ENCODE measurements at regions of chr10 and their contacts with region 1.

Region 1: DNA sequence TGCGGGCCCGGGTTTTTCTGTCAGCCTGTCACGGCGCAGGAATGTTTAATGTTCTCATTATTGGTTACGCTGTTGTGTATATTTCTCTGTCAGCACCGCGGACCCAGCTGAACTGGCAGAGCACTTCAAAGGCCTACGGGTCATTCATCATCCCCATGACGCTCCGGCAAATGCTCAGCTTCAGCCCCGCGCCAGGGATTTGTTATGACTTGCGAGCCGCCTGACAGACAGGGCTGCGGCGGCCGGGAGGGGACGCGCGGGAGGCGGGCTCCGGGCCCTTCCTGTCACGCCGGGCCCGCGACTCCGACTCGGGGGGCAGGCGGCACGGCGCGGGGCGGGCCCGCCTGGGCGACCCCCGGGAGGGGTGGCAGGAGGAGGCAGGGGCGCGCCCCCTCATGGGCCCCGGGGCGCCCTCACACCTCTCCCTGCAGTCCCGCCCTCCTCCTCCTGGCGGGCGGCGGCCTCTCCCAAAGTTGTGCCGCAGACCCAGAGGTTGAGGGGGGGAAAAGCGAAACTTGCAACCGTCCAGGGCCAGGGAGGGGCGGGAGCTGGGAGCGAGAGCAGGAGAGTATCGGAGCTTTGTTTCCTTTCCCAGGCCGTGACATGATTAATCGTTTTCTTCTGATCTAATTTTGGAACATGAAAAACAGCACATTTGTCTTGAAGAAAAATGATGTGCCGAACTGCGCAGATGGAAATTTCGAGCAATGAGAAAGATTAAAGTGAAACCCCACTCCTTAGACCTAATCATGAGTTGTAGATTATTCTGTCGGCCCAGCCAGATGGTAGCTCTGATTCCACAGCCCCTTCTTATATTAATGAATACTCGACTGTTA is 59.3 kb upstream of the COMTD1 start:
- DNase-seq: peak; percentile 89 to 96 (median 93)
- ATAC-seq: peak; percentile 82 to 89 (median 85)
- H3K4me3 ChIP-seq: peak overlapping the region; percentile 13 to 60 (median 53)
- H3K27ac ChIP-seq: peak overlapping the region; percentile 95 to 99 (median 98)
- H3K4me1 ChIP-seq: peaks cover 17 to 29% (median 27%) of the 10 kb centered on the region in 3 donors
- H3K27me3 ChIP-seq: no peaks in the 10 kb centered on the region
- CTCF ChIP-seq: peak in 3 of 4 donors; percentile 12 to 19 (median 13)

Region 2: GRCh38 chr10:75210282-75211006 is 84.6 kb before region 1 on chr10 and contains the start of gene VDAC2:
- intact Hi-C with region 1: no loop called
- DNase-seq: peak; percentile 88 to 96 (median 94)
- ATAC-seq: peak; percentile 95 to 98 (median 96)
- H3K4me3 ChIP-seq: peak within 1 kb of the TSS; percentile 66 to 99 (median 84)
- H3K27ac ChIP-seq: peak within 1 kb of the TSS; percentile 97 to 99 (median 98)
- H3K4me1 ChIP-seq: peaks cover 11 to 13% (median 11%) of the 10 kb centered on the region in 3 donors
- H3K27me3 ChIP-seq: no peaks in the 10 kb centered on the region
- CTCF ChIP-seq: no peak
- total RNA-seq, gene VDAC2: 79.4 to 113 (median 96.4) TPM

Region 3: DNA sequence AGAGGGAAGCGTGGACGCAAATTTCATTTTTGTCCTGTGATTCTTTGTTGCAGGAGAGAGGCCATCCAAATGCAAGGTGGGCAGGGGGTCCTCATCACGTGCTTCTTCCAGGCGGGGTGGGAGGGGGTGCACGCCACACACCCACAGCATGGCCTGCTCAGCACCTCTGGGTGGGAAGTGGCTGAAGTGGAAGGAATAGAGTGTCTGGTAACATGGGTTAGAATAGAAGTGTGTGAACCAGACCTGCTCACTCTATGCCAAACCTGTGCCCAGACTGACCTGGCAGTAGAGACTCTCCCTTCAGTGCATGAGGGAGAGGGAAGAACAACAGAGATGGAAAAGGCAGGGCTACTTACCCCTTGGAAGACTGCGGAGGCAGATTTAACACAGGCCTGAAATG is 84.7 kb after region 1 on chr10:
- intact Hi-C with region 1: loop called in 1 of 3 experiments (anchors 10 kb)
- DNase-seq: no peak
- ATAC-seq: peak in 2 of 4 donors; percentile 23 to 33
- H3K4me3 ChIP-seq: no peak overlapping the region
- H3K27ac ChIP-seq: no peak overlapping the region
- H3K4me1 ChIP-seq: no peaks in the 10 kb centered on the region
- H3K27me3 ChIP-seq: no peaks in the 10 kb centered on the region
- CTCF ChIP-seq: no peak

Measured in pancreas (tissue), 10 donors.